Heart left ventricle (tissue), 16 donors: ENCODE measurements at regions of chr10 and their contacts with region 1.

Region 1: DNA sequence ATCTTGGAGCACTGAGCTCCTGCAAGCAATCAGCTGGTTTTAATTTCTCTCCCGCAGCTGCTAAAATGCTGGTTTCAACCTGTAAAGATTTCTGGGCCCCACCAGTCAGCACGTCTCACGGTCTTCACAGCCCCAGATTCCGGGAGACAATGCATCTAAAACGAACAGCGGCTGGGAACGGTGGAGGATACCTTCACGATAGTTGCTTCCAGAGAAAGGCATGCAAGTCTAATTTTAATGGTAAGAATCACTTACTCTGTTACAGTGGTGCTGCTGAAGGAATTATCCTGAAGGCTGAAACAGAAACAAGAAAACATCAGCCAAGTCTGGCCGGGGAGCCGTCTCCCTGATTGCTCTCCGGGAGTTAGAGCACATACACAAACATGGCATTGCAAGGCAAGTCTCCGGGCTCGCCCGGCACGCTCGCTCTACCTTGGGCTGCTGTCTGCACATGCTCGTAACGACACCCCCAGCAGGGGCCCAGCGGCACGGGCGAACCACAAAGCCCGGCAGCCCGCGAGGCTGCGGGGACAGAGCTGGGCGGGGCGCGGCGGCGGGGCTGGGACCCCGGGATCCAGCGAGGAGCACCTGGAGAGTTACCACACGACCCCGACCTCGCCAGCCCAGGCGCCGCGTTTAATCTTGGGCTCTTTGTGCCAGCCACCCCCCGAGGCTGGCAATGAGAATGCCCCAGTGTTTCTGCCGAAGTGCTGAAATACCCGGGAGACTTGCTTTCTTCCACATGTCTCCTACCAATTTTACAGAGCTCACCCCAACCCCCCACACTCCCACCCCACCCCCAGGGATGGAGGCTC is at the start of gene FAM13C:
- DNase-seq: peak; percentile 55 to 83 (median 67)
- ATAC-seq: peak; percentile 63 to 90 (median 82)
- H3K4me3 ChIP-seq: peak within 1 kb of the TSS; percentile 47 to 78 (median 64)
- H3K27ac ChIP-seq: peak within 1 kb of the TSS; percentile 64 to 94 (median 86)
- H3K4me1 ChIP-seq: peaks cover 6 to 60% (median 33%) of the 10 kb centered on the region in 12 donors
- H3K27me3 ChIP-seq: peaks cover 0 to 4% (median 0%) of the 10 kb centered on the region in 9 donors
- CTCF ChIP-seq: peak in 1 of 12 donors; percentile 5
- POLR2A ChIP-seq: no peak
- total RNA-seq, gene FAM13C: 3.6 to 12.4 (median 8.5) TPM

Region 2: DNA sequence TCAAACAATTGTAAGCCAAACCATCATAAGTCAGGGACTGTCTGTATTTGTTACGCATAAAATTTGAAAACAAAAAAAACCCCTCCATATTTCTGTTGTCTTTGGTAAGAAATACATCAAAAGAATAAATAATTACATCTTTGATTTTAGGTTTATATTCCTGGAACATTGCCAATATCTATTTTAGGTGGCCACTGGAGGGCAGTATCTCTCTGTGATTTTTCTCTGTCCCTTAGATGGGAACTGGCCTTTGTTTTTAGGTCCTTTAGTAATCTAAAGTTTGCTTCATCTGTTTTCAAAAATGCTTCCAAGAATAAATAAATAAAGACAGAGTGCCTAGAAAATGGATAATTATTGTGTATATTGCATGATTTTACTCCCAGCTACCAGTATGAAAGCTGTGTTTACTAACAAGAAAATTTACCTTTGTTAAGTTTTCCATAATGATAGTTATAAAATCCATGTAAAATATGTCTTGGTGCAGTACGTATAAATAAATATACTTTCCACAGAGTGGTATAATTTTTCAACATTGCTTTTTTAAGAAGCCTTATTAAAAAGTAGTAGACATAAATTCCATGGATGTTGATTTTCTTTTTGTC is 121.7 kb before region 1 on chr10:
- intact Hi-C with region 1: loop called in 4 of 10 experiments (anchors 5 to 10 kb)
- DNase-seq: peak in 1 of 5 donors; percentile 9
- ATAC-seq: no peak
- H3K4me3 ChIP-seq: no peak overlapping the region
- H3K27ac ChIP-seq: no peak overlapping the region
- H3K4me1 ChIP-seq: peaks cover 0 to 4% (median 0%) of the 10 kb centered on the region in 12 donors
- H3K27me3 ChIP-seq: no peaks in the 10 kb centered on the region
- CTCF ChIP-seq: peak; percentile 45 to 85 (median 66)
- POLR2A ChIP-seq: no peak

Region 3: GRCh38 chr10:59245686-59246085 is 116.7 kb before region 1 on chr10:
- intact Hi-C with region 1: loop called in 4 of 10 experiments (anchors 5 to 10 kb)
- DNase-seq: no peak
- ATAC-seq: no peak
- H3K4me3 ChIP-seq: no peak overlapping the region
- H3K27ac ChIP-seq: no peak overlapping the region
- H3K4me1 ChIP-seq: peaks cover 0 to 4% (median 0%) of the 10 kb centered on the region in 12 donors
- H3K27me3 ChIP-seq: no peaks in the 10 kb centered on the region
- CTCF ChIP-seq: no peak
- POLR2A ChIP-seq: no peak

Region 4: DNA sequence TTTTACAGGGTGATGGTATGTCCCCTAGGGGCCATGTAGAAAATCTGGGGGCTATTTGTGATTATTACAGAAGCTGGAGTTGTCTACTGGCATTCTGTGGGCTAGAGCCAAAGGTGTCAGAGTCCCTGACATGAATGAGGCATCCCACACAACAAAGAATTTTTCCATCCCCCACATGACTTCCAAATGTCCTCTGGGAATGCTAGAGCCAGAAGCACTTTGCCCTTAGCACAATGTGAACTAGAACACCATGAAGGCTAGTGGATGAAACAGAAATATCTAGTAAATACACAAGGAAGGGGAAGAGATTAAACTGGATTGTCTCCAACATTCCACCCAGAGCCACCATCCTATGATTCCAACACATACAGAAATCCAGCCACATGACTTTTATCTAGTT is 46.9 kb before region 1 on chr10:
- intact Hi-C with region 1: loop called in 6 of 10 experiments (anchors 2 to 10 kb)
- DNase-seq: peak in 2 of 5 donors; percentile 33 to 34
- ATAC-seq: peak; percentile 71 to 87 (median 80)
- H3K4me3 ChIP-seq: no peak overlapping the region
- H3K27ac ChIP-seq: peak overlapping the region in 11 of 12 donors; percentile 18 to 75 (median 39)
- H3K4me1 ChIP-seq: peaks cover 0 to 73% (median 39%) of the 10 kb centered on the region in 12 donors
- H3K27me3 ChIP-seq: no peaks in the 10 kb centered on the region
- CTCF ChIP-seq: no peak
- POLR2A ChIP-seq: no peak

Region 5: GRCh38 chr10:59323036-59323459 is 39.3 kb before region 1 on chr10:
- intact Hi-C with region 1: loop called in 6 of 10 experiments (anchors 2 to 10 kb)
- DNase-seq: no peak
- ATAC-seq: peak; percentile 79 to 91 (median 87)
- H3K4me3 ChIP-seq: no peak overlapping the region
- H3K27ac ChIP-seq: peak overlapping the region in 10 of 12 donors; percentile 7 to 82 (median 24)
- H3K4me1 ChIP-seq: peaks cover 0 to 44% (median 17%) of the 10 kb centered on the region in 12 donors
- H3K27me3 ChIP-seq: no peaks in the 10 kb centered on the region
- CTCF ChIP-seq: no peak
- POLR2A ChIP-seq: no peak